ENCODE measurements at regions of chr4 and their contacts with region 1.

Region 1: GRCh38 chr4:47519239-47519883 is 34.3 kb downstream of the ATP10D start:
- DNase-seq: no peak
- ATAC-seq: peak; percentile 99
- H3K4me3 Mint-ChIP-seq: no peak overlapping the region
- H3K27ac Mint-ChIP-seq: peak overlapping the region; percentile 69
- H3K4me1 Mint-ChIP-seq: peaks cover 20% of the 10 kb centered on the region
- H3K27me3 Mint-ChIP-seq: no peaks in the 10 kb centered on the region
- CTCF ChIP-seq: no peak

Region 2: DNA sequence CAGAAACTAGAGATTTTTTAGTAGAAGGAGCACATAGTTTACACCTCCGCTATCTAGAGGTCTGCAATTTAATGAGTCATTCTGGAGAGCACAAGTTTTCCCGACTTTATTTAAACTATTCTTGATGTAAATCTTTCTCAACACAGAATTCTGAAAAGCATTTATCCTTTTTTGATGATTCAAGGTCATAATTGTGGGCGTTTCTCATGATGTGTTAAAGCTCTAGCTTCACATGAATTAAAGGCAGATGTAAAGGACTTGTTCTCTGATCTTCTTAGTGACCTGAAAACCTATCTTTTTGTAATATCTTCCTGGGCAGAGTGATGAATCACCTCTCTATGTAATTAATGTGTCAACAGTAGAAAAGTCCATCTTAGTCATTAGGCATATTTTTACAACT is 184.7 kb before region 1 on chr4:
- CTCF ChIA-PET with region 1: no interaction called
- POLR2A ChIA-PET with region 1: no interaction called
- intact Hi-C with region 1: no loop called
- DNase-seq: no peak
- ATAC-seq: no peak
- H3K4me3 Mint-ChIP-seq: no peak overlapping the region
- H3K27ac Mint-ChIP-seq: no peak overlapping the region
- H3K4me1 Mint-ChIP-seq: no peaks in the 10 kb centered on the region
- H3K27me3 Mint-ChIP-seq: peaks cover 7% of the 10 kb centered on the region
- CTCF ChIP-seq: no peak

Region 3: GRCh38 chr4:47531241-47531953 is 12.0 kb after region 1 on chr4:
- CTCF ChIA-PET with region 1: no interaction called
- POLR2A ChIA-PET with region 1: no interaction called
- intact Hi-C with region 1: loop called (anchors 1 kb)
- DNase-seq: no peak
- ATAC-seq: peak; percentile 90
- H3K4me3 Mint-ChIP-seq: peak overlapping the region; percentile 33
- H3K27ac Mint-ChIP-seq: peak overlapping the region; percentile 33
- H3K4me1 Mint-ChIP-seq: peaks cover 45% of the 10 kb centered on the region
- H3K27me3 Mint-ChIP-seq: no peaks in the 10 kb centered on the region
- CTCF ChIP-seq: no peak

Measured in activated B cell treated with CpG ODN at 0.5 μM for 24 hours (primary cell).